ENCODE measurements at regions of chr1 and their contacts with region 1.

Region 1: DNA sequence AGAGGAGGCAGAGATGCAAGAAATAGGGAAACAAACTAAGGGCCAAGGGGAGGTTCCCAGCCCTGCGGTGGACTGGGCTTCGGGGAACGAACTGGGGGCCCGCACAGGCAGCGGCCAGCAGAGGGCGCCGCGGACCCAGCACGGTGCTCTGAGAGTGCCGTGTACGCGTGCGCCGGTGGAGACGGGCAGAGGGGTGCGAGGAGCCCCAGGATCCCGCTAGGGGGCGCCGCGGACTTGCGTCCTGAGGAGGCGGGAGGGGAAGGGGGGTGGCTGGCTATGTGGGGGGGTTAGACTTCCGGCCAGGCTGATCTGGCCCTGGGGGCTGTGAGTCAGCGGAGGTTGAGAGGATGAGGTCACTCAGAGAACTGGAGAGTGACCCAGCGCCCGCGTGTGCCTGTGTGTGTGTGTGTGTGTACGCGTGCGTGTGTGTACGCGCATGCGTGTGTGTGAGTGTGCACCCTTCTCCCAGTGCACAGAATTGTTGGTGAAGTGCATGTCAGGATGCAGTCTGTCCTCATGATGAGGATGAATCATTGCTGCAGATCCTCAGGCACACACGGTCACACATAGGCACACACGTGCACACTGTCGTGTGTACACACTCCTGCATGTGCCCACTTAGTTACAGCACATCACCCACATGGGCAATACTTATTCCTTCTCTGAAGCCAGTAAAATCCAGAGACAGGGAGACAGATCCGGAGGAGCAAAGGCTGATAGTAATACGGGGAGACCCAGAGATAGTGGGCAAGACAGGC is 17.0 kb downstream of the NES start:
- DNase-seq: peak; percentile 97
- H3K4me3 ChIP-seq: peak overlapping the region; percentile 25; the same call in 1 of the 2 replicates
- H3K27ac ChIP-seq: peak overlapping the region; percentile 86
- H3K27me3 ChIP-seq: peaks cover 23% of the 10 kb centered on the region
- CTCF ChIP-seq: peak; percentile 95

Region 2: DNA sequence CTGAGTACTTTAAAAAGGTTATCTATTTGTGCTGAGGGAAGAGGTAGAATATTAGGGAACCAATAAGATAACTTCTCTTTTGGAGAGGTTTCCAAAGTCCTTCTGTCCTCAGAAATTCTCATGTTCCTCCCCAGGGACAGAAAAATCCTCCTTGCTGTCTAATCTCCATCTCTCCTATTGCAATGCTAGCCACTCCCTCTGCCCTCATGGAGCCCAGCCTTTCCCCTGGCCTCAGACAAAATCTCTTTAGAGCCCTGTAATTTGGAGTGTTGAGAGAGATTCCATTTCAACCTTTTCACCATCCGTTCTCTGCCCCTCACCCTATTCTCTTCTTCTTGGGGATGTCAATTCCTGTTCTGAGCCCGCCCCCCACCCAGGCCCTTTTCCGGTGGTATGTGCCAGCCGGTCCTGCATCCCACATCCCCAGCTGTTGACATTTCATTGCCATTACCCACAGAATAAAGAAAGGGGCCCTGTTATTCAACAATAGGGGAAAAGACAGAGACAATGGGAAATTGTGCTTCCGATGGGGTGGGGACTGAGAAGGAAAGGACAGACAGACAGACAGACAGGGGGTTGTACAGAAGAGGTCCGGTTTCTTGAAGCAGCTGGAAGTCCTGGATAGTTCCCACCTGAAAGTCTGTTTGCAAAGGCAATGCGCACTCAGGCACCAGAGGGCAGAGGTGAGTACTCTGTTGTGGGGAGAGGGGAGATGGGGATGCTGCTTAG is 41.2 kb before region 1 on chr1 and contains the start of gene HAPLN2:
- CTCF ChIA-PET with region 1: interaction called, 175 read pairs
- POLR2A ChIA-PET with region 1: interaction called, 4 read pairs
- DNase-seq: no peak
- H3K4me3 ChIP-seq: no peak within 1 kb of the TSS
- H3K27ac ChIP-seq: no peak within 1 kb of the TSS
- H3K27me3 ChIP-seq: peaks cover 55% of the 10 kb centered on the region
- CTCF ChIP-seq: peak; percentile 46
- polyA plus RNA-seq, gene HAPLN2: not detected in 2 replicates

Region 3: GRCh38 chr1:156625436-156626078 is 34.6 kb before region 1 on chr1:
- CTCF ChIA-PET with region 1: interaction called, 175 read pairs
- POLR2A ChIA-PET with region 1: interaction called, 4 read pairs
- DNase-seq: no peak
- H3K4me3 ChIP-seq: no peak overlapping the region
- H3K27ac ChIP-seq: no peak overlapping the region
- H3K27me3 ChIP-seq: peaks cover 46% of the 10 kb centered on the region
- CTCF ChIP-seq: peak; percentile 80

Region 4: GRCh38 chr1:156677616-156678596 is 17.7 kb after region 1 on chr1:
- CTCF ChIA-PET with region 1: interaction called, 204 read pairs
- POLR2A ChIA-PET with region 1: interaction called, 36 read pairs
- DNase-seq: no peak
- H3K4me3 ChIP-seq: peak overlapping the region; percentile 64
- H3K27ac ChIP-seq: peak overlapping the region; percentile 31
- H3K27me3 ChIP-seq: peaks cover 12% of the 10 kb centered on the region
- CTCF ChIP-seq: peak; percentile 96

Region 5: GRCh38 chr1:156697481-156697880 is 37.3 kb after region 1 on chr1:
- CTCF ChIA-PET with region 1: interaction called, 10 read pairs
- POLR2A ChIA-PET with region 1: no interaction called
- DNase-seq: no peak
- H3K4me3 ChIP-seq: no peak overlapping the region
- H3K27ac ChIP-seq: no peak overlapping the region
- H3K27me3 ChIP-seq: no peaks in the 10 kb centered on the region
- CTCF ChIP-seq: no peak

Region 6: GRCh38 chr1:156705918-156706656 is 45.9 kb after region 1 on chr1:
- CTCF ChIA-PET with region 1: interaction called, 29 read pairs
- POLR2A ChIA-PET with region 1: no interaction called
- DNase-seq: no peak
- H3K4me3 ChIP-seq: peak overlapping the region; percentile 52
- H3K27ac ChIP-seq: peak overlapping the region; percentile 57
- H3K27me3 ChIP-seq: no peaks in the 10 kb centered on the region
- CTCF ChIP-seq: peak; percentile 76

Region 7: GRCh38 chr1:156801409-156802121 is 141.4 kb after region 1 on chr1:
- CTCF ChIA-PET with region 1: no interaction called
- POLR2A ChIA-PET with region 1: no interaction called
- DNase-seq: no peak
- H3K4me3 ChIP-seq: no peak overlapping the region
- H3K27ac ChIP-seq: peak overlapping the region; percentile 21
- H3K27me3 ChIP-seq: no peaks in the 10 kb centered on the region
- CTCF ChIP-seq: peak; percentile 35

Measured in AG04450 (cell line).